Left cardiac atrium (tissue), 4 donors: ENCODE measurements at regions of chr19 and their contacts with region 1.

Region 1: GRCh38 chr19:14091813-14092462 is 1.4 kb upstream of the SAMD1 start:
- DNase-seq: no peak
- ATAC-seq: peak; percentile 0 to 3

Region 2: DNA sequence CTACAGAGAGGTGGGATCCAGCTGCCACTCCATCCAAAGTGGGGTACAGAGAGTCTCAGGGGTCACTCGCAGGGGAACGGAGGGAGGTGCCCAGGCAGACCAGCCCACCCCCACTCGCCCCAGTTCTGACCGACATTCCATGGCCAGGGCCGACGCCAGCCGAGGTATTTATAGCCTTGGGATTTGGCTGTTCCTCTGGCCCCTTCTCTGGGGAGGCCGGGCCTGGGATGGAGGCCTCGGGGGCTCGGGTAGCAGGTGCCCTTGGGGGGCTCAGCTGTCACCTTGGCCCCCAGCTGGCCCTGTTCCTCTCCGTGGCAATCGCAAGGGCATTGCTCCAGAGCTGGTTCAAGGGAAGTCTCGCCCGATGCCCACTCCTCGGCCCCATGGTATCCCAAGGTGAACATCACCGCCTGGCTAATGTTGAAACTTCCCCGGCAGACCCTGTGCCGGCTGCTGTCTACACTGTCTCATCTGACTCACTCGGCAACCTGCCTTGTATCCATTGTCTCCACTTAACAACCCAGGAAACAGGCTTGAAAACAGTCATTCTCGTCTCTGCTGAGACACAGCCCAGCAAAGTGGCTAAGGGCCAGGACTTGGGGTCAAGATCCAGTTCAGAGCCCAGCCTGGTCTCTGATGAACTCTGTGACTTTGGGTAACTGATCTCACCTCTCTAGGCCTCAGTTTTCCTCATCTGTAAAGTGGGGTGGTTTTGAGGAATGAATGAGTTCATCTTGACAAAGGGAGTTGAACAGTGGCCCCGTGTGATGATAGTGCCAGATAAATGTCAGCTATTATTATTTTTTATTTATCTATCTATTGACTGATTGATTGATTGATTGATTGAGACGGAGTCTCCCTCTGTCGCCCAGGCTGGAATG is 15.9 kb after region 1 on chr19:
- intact Hi-C with region 1: loop called in 1 of 2 experiments (anchors 2 kb)
- DNase-seq: peak; percentile 72
- ATAC-seq: peak; percentile 83

Region 3: GRCh38 chr19:14147797-14148605 is 56.1 kb after region 1 on chr19:
- intact Hi-C with region 1: no loop called
- DNase-seq: peak; percentile 85
- ATAC-seq: peak; percentile 83 to 87